Tibial artery (tissue), 4 donors: ENCODE measurements at regions of chr1 and their contacts with region 1.

Region 1: GRCh38 chr1:61641578-61642336 is 83.2 kb downstream of the TM2D1 start:
- DNase-seq: peak; percentile 86 to 93
- H3K4me3 ChIP-seq: peak overlapping the region; percentile 30 to 43
- H3K27ac ChIP-seq: peak overlapping the region; percentile 84 to 90
- H3K4me1 ChIP-seq: peaks cover 0 to 59% (median 34%) of the 10 kb centered on the region in 4 donors
- H3K27me3 ChIP-seq: no peaks in the 10 kb centered on the region
- CTCF ChIP-seq: peak; percentile 75 to 86

Region 2: DNA sequence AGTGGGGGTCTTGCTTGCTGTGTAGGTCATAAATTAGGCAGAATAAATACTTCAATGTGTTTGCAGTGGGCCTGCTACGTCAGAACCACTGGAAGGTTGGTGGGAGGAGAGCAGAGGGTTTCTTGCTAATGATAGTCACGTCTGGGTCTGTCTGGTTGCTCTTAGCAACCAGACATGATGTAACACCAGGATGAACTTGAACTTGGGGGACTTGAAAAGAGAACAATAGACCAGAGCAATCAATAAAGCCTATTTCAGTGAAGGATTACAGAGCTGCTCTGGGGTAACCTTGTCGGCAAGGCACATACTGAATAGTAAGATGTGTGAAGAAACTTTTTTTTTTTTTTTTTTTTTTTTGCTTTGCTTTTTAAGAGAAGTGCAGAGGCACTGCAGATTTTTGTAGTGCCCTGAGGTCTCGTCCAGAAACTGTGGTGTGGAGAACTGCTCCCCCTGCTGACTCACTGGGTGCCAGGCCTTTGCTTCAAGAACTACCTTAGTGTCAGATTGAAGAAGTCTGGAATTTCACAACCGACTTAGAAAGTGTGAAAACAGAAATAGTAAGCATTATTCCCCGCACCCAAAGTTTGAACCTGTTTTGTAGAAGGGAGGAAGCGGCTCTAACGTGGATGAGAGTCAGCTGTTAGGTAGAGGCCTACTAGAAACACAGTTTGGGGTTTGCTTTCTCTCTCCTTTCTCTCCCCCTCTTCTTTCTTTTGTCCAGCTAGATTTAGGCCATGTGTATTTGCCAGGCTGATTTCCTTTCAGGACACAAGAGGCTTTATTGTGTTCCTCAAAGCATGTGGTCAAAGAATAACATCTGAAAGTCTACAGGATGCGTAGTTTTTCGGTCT is 188.4 kb before region 1 on chr1:
- intact Hi-C with region 1: loop called (anchors 10 kb)
- DNase-seq: peak; percentile 95 to 97
- H3K4me3 ChIP-seq: no peak overlapping the region
- H3K27ac ChIP-seq: peak overlapping the region; percentile 88 to 93
- H3K4me1 ChIP-seq: peaks cover 0 to 58% (median 48%) of the 10 kb centered on the region in 4 donors
- H3K27me3 ChIP-seq: no peaks in the 10 kb centered on the region
- CTCF ChIP-seq: peak; percentile 74

Region 3: GRCh38 chr1:61699911-61700851 is 58.4 kb after region 1 on chr1:
- intact Hi-C with region 1: no loop called
- DNase-seq: no peak
- H3K4me3 ChIP-seq: no peak overlapping the region
- H3K27ac ChIP-seq: no peak overlapping the region
- H3K4me1 ChIP-seq: no peaks in the 10 kb centered on the region
- H3K27me3 ChIP-seq: no peaks in the 10 kb centered on the region
- CTCF ChIP-seq: no peak